IMR-90 (cell line): ENCODE measurements at regions of chr12 and their contacts with region 1.

Region 1: GRCh38 chr12:26614020-26614616 is 218.9 kb downstream of the ITPR2 start:
- DNase-seq: peak; percentile 26
- ATAC-seq: no peak
- H3K4me3 ChIP-seq: no peak overlapping the region
- H3K27ac ChIP-seq: no peak overlapping the region
- H3K4me1 ChIP-seq: no peaks in the 10 kb centered on the region
- H3K27me3 ChIP-seq: no peaks in the 10 kb centered on the region
- CTCF ChIP-seq: peak; percentile 57
- POLR2A ChIP-seq: no peak
- RAD21 ChIP-seq: peak; percentile 72

Region 2: DNA sequence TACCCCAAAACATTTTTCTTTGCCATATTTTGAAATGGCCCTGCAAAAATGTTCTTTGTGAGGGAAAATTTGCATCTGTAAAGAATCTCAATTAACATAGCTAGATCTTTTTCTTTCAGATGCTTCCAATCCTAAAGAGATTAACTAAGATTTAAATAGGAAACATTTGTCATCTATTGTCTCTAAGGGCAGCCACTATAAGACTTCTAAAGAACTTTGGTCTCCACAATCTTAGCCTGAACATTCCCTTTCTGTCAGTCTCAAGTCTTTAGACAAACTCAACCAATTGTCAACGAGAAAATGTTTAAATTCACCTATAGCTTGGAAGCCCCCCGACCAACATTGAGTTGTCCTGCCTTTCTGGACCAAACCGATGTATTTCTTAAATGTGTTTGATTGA is 726.8 kb before region 1 on chr12:
- CTCF ChIA-PET with region 1: interaction called, 10 read pairs
- POLR2A ChIA-PET with region 1: no interaction called
- dilution Hi-C with region 1: no loop called
- in situ Hi-C with region 1: no loop called
- intact Hi-C with region 1: no loop called
- DNase-seq: no peak
- ATAC-seq: no peak
- H3K4me3 ChIP-seq: no peak overlapping the region
- H3K27ac ChIP-seq: no peak overlapping the region
- H3K4me1 ChIP-seq: no peaks in the 10 kb centered on the region
- H3K27me3 ChIP-seq: peaks cover 2% of the 10 kb centered on the region; the same call in 1 of the 2 replicates
- CTCF ChIP-seq: no peak
- POLR2A ChIP-seq: no peak
- RAD21 ChIP-seq: no peak

Region 3: GRCh38 chr12:26119391-26119981 is 494.6 kb before region 1 on chr12:
- CTCF ChIA-PET with region 1: interaction called, 8 read pairs
- POLR2A ChIA-PET with region 1: no interaction called
- dilution Hi-C with region 1: no loop called
- in situ Hi-C with region 1: no loop called
- intact Hi-C with region 1: loop called (anchors 1 kb)
- DNase-seq: peak; percentile 78
- ATAC-seq: peak; percentile 25; the same call in 1 of the 2 replicates
- H3K4me3 ChIP-seq: no peak overlapping the region
- H3K27ac ChIP-seq: no peak overlapping the region
- H3K4me1 ChIP-seq: no peaks in the 10 kb centered on the region
- H3K27me3 ChIP-seq: peaks cover 3% of the 10 kb centered on the region
- CTCF ChIP-seq: peak; percentile 69
- POLR2A ChIP-seq: no peak
- RAD21 ChIP-seq: peak; percentile 71

Region 4: DNA sequence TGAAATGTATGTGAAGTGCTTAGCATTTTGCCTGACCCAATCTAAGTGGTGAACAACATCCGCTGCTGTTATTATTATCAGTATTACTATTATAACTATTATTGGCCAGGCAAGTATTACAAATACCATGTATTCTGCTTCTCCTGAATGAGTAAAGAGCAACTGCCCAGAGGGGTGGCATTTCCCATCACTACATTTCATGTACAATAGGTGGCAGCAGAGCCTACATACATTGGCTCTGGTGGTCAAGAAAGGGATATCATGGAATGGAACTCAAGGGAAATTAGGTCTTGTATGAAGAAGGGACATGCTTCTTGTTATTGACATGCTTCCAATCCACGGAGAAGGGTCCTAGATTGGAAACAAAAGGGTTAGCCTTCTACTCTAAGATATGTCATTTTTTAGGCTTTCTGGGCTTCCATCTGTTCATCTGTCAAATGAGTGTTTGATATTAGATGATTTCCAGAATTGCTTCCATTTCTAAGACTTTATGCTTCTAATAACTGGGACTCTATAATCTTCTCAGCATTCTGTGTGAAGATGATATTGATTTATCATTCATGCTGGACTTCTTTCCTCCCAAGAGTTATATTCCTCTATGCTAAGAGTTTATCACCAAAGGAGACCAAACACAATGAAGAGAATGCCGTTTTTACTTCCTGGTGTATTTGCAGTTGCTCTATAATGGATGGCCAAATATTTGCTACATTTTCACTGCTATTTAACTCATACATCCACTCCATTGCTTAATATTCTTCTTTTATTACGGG is 179.6 kb before region 1 on chr12:
- CTCF ChIA-PET with region 1: no interaction called
- POLR2A ChIA-PET with region 1: no interaction called
- dilution Hi-C with region 1: no loop called
- in situ Hi-C with region 1: no loop called
- intact Hi-C with region 1: loop called (anchors 5 kb)
- DNase-seq: peak; percentile 68
- ATAC-seq: peak; percentile 84; the same call in 1 of the 2 replicates
- H3K4me3 ChIP-seq: no peak overlapping the region
- H3K27ac ChIP-seq: no peak overlapping the region
- H3K4me1 ChIP-seq: no peaks in the 10 kb centered on the region
- H3K27me3 ChIP-seq: no peaks in the 10 kb centered on the region
- CTCF ChIP-seq: peak; percentile 81
- POLR2A ChIP-seq: no peak
- RAD21 ChIP-seq: peak; percentile 79

Region 5: DNA sequence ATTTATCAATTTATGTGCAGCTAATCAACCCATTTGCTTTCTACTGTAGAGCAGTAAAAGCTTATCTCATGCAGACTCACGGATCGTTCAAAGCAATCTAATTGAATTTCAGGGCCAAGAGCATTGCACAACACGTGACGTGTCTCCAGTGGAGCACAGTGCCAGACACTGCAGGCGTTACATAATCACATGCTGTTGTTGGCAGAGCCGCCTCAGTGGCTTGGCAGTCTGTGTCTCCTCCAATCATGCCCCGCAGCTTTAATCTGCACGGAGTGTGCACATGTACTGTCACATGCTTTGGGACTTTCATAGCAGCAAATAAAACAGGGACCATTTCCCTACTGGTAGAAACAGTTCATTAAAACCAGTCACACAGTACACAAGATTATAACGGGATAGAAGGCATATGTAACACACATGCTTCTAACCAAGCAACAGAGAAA is 90.4 kb before region 1 on chr12:
- CTCF ChIA-PET with region 1: no interaction called
- POLR2A ChIA-PET with region 1: no interaction called
- dilution Hi-C with region 1: no loop called
- in situ Hi-C with region 1: no loop called
- intact Hi-C with region 1: loop called (anchors 5 kb)
- DNase-seq: peak; percentile 93
- ATAC-seq: peak; percentile 95
- H3K4me3 ChIP-seq: no peak overlapping the region
- H3K27ac ChIP-seq: no peak overlapping the region
- H3K4me1 ChIP-seq: no peaks in the 10 kb centered on the region
- H3K27me3 ChIP-seq: no peaks in the 10 kb centered on the region
- CTCF ChIP-seq: no peak
- POLR2A ChIP-seq: no peak
- RAD21 ChIP-seq: no peak